ENCODE measurements at regions of chr7 and their contacts with region 1.

Region 1: DNA sequence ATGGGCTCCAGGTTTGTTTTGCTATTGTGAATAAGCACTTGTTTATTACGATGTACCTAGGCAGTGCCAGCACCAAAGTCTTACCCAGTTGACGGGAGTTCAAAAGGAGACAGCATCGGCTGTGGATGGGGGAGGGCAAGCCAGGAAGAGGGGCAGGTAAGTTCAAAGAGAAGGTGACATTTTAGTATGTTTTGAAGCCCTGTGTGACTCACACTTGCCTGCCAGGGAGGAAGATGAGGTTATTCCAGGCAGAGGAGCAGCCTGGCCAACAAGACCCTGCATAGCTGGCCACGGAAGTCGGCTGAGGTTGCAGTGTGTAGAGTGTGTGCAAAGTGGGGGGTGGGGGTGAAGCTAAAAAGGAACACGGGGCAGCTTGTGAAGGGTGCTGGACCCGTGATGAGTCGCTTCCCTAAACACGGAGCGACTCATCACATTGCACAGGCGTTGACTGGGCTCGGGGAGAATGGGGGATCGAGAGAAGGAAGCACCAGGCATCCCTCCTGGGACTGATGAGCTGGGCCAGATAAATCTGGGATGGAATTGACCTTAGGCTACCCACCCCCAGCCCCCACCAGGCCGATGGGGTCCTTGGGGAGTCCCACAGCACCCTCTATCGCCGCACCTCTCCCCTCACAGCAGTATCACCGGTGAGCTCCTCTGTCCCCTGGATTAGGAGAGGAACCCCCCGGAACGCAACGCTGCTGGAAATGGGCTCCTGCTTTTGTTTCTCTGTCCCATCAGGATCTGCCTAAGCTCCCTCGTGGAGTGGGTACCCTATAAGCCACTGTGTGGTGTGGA is 97.9 kb upstream of the IKZF1 start:
- DNase-seq: no peak
- ATAC-seq: no peak
- H3K4me3 Mint-ChIP-seq: no peak overlapping the region
- H3K27ac Mint-ChIP-seq: peak overlapping the region; percentile 43
- H3K4me1 Mint-ChIP-seq: peaks cover 57% of the 10 kb centered on the region
- H3K27me3 Mint-ChIP-seq: no peaks in the 10 kb centered on the region
- CTCF ChIP-seq: no peak

Region 2: DNA sequence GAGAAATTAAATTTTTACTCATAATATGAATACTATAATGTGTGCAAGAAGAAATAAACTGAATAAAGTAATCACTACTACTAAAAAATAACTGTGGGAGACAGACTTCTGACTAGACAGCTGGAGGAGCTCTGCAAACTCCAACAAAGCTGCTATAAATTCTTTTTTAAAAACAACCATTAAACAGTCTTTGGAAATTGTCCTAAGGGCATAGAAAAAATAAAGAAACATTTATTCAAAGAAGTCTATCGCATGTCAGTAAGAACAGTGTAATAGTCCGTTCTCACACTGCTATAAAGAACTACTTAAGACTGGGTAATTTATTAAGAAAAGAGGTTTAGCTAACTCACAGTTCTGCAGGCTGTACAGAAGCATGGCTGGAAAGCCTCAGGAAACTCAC is 169.6 kb before region 1 on chr7:
- CTCF ChIA-PET with region 1: no interaction called
- POLR2A ChIA-PET with region 1: no interaction called
- intact Hi-C with region 1: no loop called
- DNase-seq: no peak
- ATAC-seq: no peak
- H3K4me3 Mint-ChIP-seq: no peak overlapping the region
- H3K27ac Mint-ChIP-seq: no peak overlapping the region
- H3K4me1 Mint-ChIP-seq: no peaks in the 10 kb centered on the region
- H3K27me3 Mint-ChIP-seq: peaks cover 21% of the 10 kb centered on the region
- CTCF ChIP-seq: no peak

Region 3: DNA sequence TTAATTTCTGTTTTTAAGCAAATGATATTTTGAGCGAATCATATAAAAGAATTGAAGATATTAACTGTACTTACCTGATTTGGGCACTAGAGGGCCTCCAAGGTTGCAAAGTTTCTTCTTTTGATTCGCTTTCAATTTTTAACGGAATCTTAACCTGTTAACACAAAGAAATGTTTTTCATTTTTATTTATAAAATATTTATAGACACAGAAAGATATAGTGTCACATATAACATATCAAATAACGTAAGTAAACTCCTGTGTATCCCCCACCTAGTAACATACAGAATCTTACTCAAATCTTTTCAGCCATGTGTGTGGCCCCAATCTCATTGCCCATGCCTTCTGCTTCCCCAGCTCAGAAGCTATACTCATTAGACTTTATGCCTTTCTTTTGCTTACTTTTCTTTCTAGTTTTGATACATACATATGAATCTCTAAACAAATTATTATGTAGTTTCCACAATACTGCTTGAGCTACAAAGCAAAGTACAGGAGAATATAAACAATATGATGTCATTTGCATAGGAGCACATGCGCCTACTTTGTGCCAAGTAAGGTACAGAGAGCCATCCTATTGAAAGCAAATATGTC is 64.1 kb before region 1 on chr7:
- CTCF ChIA-PET with region 1: interaction called, 37 read pairs
- POLR2A ChIA-PET with region 1: interaction called, 6 read pairs
- intact Hi-C with region 1: loop called (anchors 1 kb)
- DNase-seq: no peak
- ATAC-seq: peak; percentile 62
- H3K4me3 Mint-ChIP-seq: peak overlapping the region; percentile 72
- H3K27ac Mint-ChIP-seq: peak overlapping the region; percentile 86
- H3K4me1 Mint-ChIP-seq: peaks cover 58% of the 10 kb centered on the region
- H3K27me3 Mint-ChIP-seq: no peaks in the 10 kb centered on the region
- CTCF ChIP-seq: no peak

Region 4: GRCh38 chr7:50164559-50165170 is 42.0 kb before region 1 on chr7:
- CTCF ChIA-PET with region 1: no interaction called
- POLR2A ChIA-PET with region 1: no interaction called
- intact Hi-C with region 1: no loop called
- DNase-seq: no peak
- ATAC-seq: no peak
- H3K4me3 Mint-ChIP-seq: no peak overlapping the region
- H3K27ac Mint-ChIP-seq: no peak overlapping the region
- H3K4me1 Mint-ChIP-seq: peaks cover 52% of the 10 kb centered on the region
- H3K27me3 Mint-ChIP-seq: no peaks in the 10 kb centered on the region
- CTCF ChIP-seq: no peak

Region 5: GRCh38 chr7:50266635-50267386 is 60.2 kb after region 1 on chr7:
- CTCF ChIA-PET with region 1: interaction called, 13 read pairs
- POLR2A ChIA-PET with region 1: interaction called, 26 read pairs
- intact Hi-C with region 1: no loop called
- DNase-seq: no peak
- ATAC-seq: peak; percentile 66
- H3K4me3 Mint-ChIP-seq: peak overlapping the region; percentile 78
- H3K27ac Mint-ChIP-seq: peak overlapping the region; percentile 87
- H3K4me1 Mint-ChIP-seq: peaks cover 99% of the 10 kb centered on the region
- H3K27me3 Mint-ChIP-seq: no peaks in the 10 kb centered on the region
- CTCF ChIP-seq: no peak

Region 6: GRCh38 chr7:50317221-50317678 is 110.6 kb after region 1 on chr7:
- CTCF ChIA-PET with region 1: interaction called, 18 read pairs
- POLR2A ChIA-PET with region 1: interaction called, 4 read pairs
- intact Hi-C with region 1: loop called (anchors 1 kb)
- DNase-seq: no peak
- ATAC-seq: peak; percentile 63
- H3K4me3 Mint-ChIP-seq: peak overlapping the region; percentile 74
- H3K27ac Mint-ChIP-seq: peak overlapping the region; percentile 96
- H3K4me1 Mint-ChIP-seq: peaks cover 96% of the 10 kb centered on the region
- H3K27me3 Mint-ChIP-seq: no peaks in the 10 kb centered on the region
- CTCF ChIP-seq: no peak

Region 7: DNA sequence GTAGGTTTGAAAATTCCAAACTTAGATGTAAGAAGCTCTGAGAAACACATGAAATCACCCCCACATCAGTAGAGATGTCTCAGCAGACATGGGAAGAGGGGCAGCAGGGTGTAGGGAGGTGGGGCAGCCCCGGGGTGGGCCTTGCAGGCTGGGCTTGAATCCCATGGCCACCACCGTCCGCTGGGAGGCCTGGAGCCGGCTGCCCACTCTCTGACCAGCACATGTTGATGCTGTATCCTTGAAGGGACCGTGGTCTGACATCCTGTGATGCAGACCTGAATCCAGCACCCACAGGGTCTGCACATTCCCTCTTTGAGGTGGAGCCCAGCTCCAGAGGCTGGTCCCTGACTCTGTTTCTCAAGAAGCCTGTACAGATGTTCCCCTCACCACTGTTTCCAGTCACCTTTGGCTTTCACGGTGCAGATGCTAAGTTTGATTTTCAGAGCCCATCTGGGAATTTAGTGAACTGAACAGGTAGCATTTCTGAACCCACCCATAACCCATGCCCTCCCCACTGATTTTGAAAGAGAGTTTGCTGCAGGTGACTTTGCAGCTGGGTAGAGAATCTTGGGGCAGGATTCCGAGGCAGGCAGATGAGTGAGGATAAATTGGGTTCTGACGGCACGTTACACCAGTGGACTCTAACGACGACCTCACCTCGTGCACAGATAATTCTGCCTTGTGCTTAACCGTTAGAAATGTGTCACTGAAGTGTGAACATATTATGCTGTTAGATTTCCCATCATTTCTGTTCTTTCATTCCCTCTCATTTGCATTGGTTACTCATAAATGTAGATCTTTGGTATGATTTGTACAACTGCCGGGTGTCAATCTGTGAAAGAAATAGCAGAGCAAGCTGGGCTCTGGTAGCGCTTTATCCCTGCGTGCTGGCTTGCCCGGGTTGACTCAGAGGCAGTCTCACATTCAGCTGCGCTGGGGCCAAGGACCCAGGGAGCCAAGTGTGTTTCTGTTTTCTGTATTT is 143.6 kb after region 1 on chr7:
- CTCF ChIA-PET with region 1: interaction called, 19 read pairs
- POLR2A ChIA-PET with region 1: interaction called, 7 read pairs
- intact Hi-C with region 1: loop called (anchors 5 kb)
- DNase-seq: no peak
- ATAC-seq: peak; percentile 76
- H3K4me3 Mint-ChIP-seq: peak overlapping the region; percentile 42
- H3K27ac Mint-ChIP-seq: peak overlapping the region; percentile 88
- H3K4me1 Mint-ChIP-seq: peaks cover 95% of the 10 kb centered on the region
- H3K27me3 Mint-ChIP-seq: no peaks in the 10 kb centered on the region
- CTCF ChIP-seq: no peak

Region 8: GRCh38 chr7:50467817-50468610 is 261.4 kb after region 1 on chr7:
- CTCF ChIA-PET with region 1: interaction called, 17 read pairs
- POLR2A ChIA-PET with region 1: interaction called, 3 read pairs
- intact Hi-C with region 1: loop called (anchors 1 kb)
- DNase-seq: peak; percentile 61
- ATAC-seq: peak; percentile 93
- H3K4me3 Mint-ChIP-seq: peak overlapping the region; percentile 45
- H3K27ac Mint-ChIP-seq: no peak overlapping the region
- H3K4me1 Mint-ChIP-seq: peaks cover 8% of the 10 kb centered on the region
- H3K27me3 Mint-ChIP-seq: no peaks in the 10 kb centered on the region
- CTCF ChIP-seq: peak; percentile 43

Region 9: GRCh38 chr7:51067757-51068156 is 861.1 kb after region 1 on chr7:
- CTCF ChIA-PET with region 1: interaction called, 3 read pairs
- POLR2A ChIA-PET with region 1: no interaction called
- intact Hi-C with region 1: loop called (anchors 10 kb)
- DNase-seq: no peak
- ATAC-seq: no peak
- H3K4me3 Mint-ChIP-seq: no peak overlapping the region
- H3K27ac Mint-ChIP-seq: no peak overlapping the region
- H3K4me1 Mint-ChIP-seq: no peaks in the 10 kb centered on the region
- H3K27me3 Mint-ChIP-seq: no peaks in the 10 kb centered on the region
- CTCF ChIP-seq: no peak

Measured in activated B cell treated with CpG ODN at 0.5 μM for 24 hours (primary cell).